ENCODE measurements at regions of chr17 and their contacts with region 1.

Region 1: DNA sequence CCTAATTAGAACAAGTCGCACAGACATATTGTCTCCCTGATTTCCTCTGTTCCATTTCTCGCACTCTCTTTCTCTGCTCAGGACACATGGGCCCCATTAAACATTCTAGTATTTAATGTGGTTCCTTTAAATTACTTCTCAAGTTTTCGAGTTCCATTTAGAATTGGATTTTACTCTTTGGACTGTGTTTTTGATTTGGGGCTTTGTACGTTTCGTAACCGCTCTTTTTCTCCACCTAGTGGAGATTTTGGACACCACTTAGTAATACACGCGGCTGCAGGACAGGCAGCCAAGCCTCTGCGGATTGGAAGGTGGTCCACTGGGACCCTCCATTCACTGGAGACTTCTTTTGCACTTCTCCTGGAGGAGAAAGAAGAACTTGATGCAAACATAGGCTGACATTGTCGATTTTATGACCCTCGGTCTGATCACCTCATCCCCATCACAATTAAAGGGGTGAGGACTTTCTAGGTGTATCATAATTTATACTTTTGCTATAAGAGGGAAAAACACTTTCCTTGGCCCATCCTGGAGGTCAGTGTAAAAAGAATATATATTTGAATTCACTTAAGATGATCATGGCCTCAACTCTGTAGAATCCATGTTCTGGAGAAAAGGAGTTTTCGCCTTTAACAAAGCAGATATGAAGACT is 85.7 kb downstream of the NOG start:
- DNase-seq: no peak
- ATAC-seq: peak; percentile 81
- H3K4me3 ChIP-seq: no peak overlapping the region; a peak in 1 of 4 replicates
- H3K27ac ChIP-seq: no peak overlapping the region
- H3K4me1 ChIP-seq: 0 out of 2 replicates have a peak, but pooled peaks cover 5% of the 10 kb centered on the region
- H3K27me3 ChIP-seq: no peaks in the 10 kb centered on the region
- CTCF ChIP-seq: peak; percentile 85

Region 2: GRCh38 chr17:55254375-55254774 is 1424.9 kb before region 1 on chr17:
- CTCF ChIA-PET with region 1: no interaction called
- POLR2A ChIA-PET with region 1: no interaction called
- in situ Hi-C with region 1: no loop called
- intact Hi-C with region 1: no loop called
- DNase-seq: no peak
- ATAC-seq: no peak
- H3K4me3 ChIP-seq: no peak overlapping the region
- H3K27ac ChIP-seq: no peak overlapping the region
- H3K4me1 ChIP-seq: no peaks in the 10 kb centered on the region
- H3K27me3 ChIP-seq: peaks cover 6% of the 10 kb centered on the region
- CTCF ChIP-seq: no peak

Region 3: DNA sequence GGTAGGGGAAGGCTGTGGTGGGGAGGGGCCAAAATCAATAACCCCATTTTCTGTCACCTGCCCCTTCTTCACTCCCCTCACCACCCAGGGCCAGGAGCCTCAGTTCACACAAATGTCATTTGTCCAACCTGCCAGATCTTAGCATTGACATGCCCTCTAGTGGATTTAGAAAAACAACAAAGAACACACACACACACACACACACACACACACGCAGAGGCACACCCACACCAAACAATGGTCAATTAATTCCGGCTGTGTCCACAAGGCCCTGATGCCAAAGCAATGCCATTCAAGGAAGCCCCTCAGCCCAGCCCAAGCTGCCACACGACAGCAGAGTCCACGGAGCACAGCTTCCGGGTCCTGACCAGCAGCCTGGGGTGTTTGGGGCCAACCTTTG is 17.3 kb before region 1 on chr17:
- CTCF ChIA-PET with region 1: interaction called, 10 read pairs
- POLR2A ChIA-PET with region 1: no interaction called
- in situ Hi-C with region 1: no loop called
- intact Hi-C with region 1: no loop called
- DNase-seq: no peak
- ATAC-seq: no peak
- H3K4me3 ChIP-seq: no peak overlapping the region
- H3K27ac ChIP-seq: no peak overlapping the region
- H3K4me1 ChIP-seq: no peaks in the 10 kb centered on the region
- H3K27me3 ChIP-seq: no peaks in the 10 kb centered on the region
- CTCF ChIP-seq: no peak

Measured in Panc1 (cell line).